CD4-positive, alpha-beta memory T cell (primary cell): ENCODE measurements at regions of chr15 and their contacts with region 1.

Region 1: DNA sequence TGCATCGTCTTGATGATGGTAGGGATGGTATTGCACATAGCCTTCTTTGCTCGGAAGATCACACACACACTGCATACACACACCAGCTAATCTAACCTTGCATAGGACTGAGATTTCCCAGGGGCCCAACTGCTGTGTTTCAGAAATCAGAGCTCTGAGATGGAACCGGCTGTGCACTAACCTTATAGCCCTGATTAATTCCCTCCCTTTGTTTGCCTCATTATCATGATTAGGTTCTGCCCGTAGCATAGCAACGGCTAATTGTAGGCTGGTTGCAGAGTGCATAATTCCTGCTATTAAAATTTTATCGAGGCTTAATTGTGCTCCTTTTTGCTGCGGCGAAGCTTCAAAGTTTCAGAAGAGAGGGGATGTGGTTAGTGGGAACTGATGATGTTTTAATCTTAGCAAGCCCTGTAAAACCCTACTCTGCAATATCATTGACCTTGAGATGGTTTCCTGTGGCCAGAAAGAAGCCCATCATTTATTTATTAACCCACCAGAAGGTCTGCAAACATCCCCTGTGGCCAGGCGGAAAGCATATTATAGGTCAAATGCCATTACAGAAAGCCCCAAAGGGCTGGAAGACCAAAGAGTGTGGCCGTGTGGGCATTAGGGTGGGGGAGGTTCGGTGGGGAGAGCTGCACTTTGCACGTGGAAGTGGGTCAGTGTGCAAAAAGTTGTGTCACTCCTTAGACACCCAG is 56.2 kb upstream of the GLCE start:
- DNase-seq: peak in 4 of 5 donors; percentile 30 to 53 (median 46)
- H3K4me3 ChIP-seq: peak overlapping the region in 1 of 2 donors; percentile 36
- H3K4me3 Mint-ChIP-seq: peak overlapping the region; percentile 50 to 80 (median 66)
- H3K27ac ChIP-seq: no peak overlapping the region
- H3K27ac Mint-ChIP-seq: peak overlapping the region in 6 of 7 donors; percentile 13 to 75 (median 44)
- H3K4me1 ChIP-seq: peaks cover 50% of the 10 kb centered on the region
- H3K4me1 Mint-ChIP-seq: peaks cover 36 to 48% (median 42%) of the 10 kb centered on the region in 4 donors
- H3K27me3 ChIP-seq: no peaks in the 10 kb centered on the region
- H3K27me3 Mint-ChIP-seq: no peaks in the 10 kb centered on the region

Region 2: DNA sequence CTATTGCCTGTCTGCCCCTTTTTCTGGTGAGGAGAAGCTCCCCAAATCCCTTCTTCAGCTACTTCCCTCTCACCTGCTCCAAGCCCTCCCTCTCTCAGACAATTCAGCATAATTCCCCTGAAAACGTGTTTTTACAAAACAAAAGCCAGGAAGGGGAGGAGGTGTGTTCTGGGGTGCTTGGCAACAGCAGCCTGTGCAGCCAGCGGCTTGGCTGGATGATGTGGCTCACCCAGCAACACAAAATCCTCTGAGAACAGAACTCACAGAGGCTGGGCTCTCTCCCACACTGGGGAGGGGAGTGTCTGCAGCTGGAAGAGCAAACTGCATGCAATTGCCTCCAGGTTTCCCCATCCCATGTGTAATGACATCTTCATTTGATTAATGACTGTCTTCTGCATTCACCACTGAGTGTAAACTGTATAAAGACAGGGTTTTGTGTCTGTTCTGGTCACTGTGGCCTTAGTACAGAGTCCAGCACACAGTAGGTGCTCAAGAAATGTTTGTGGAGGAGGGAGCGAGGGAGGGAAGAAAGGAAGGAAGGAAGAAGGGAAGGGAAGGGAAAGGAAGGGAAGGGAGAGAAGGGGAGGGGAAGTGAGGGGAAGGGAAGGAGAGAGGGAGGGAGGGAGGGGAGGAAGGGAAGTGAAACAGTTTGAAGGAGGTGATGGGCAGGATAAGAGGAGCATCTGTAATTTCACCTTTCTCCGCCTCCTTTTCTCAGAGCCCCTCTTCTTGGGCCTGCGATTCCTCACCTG is 13.8 kb before region 1 on chr15:
- CTCF ChIA-PET with region 1: no interaction called
- POLR2A ChIA-PET with region 1: no interaction called
- intact Hi-C with region 1: no loop called
- DNase-seq: no peak
- H3K4me3 ChIP-seq: no peak overlapping the region
- H3K4me3 Mint-ChIP-seq: no peak overlapping the region
- H3K27ac ChIP-seq: no peak overlapping the region
- H3K27ac Mint-ChIP-seq: no peak overlapping the region
- H3K4me1 ChIP-seq: no peaks in the 10 kb centered on the region
- H3K4me1 Mint-ChIP-seq: no peaks in the 10 kb centered on the region
- H3K27me3 ChIP-seq: no peaks in the 10 kb centered on the region
- H3K27me3 Mint-ChIP-seq: peaks cover 11 to 21% of the 10 kb centered on the region in 2 donors

Region 3: GRCh38 chr15:69160141-69160993 is 56.2 kb after region 1 on chr15 and contains the start of gene GLCE:
- CTCF ChIA-PET with region 1: no interaction called
- POLR2A ChIA-PET with region 1: interaction called, 12 read pairs
- intact Hi-C with region 1: no loop called
- DNase-seq: peak; percentile 92 to 96 (median 94)
- H3K4me3 ChIP-seq: peak within 1 kb of the TSS; percentile 53 to 70
- H3K4me3 Mint-ChIP-seq: peak within 1 kb of the TSS; percentile 94 to 99 (median 97)
- H3K27ac ChIP-seq: peak within 1 kb of the TSS; percentile 65
- H3K27ac Mint-ChIP-seq: peak within 1 kb of the TSS; percentile 86 to 97 (median 95)
- H3K4me1 ChIP-seq: peaks cover 14% of the 10 kb centered on the region
- H3K4me1 Mint-ChIP-seq: peaks cover 18 to 32% (median 23%) of the 10 kb centered on the region in 4 donors
- H3K27me3 ChIP-seq: no peaks in the 10 kb centered on the region
- H3K27me3 Mint-ChIP-seq: peaks cover 0 to 8% of the 10 kb centered on the region in 2 donors
- total RNA-seq, gene GLCE: 7.2 TPM